ENCODE measurements at regions of chr6 and their contacts with region 1.

Region 1: DNA sequence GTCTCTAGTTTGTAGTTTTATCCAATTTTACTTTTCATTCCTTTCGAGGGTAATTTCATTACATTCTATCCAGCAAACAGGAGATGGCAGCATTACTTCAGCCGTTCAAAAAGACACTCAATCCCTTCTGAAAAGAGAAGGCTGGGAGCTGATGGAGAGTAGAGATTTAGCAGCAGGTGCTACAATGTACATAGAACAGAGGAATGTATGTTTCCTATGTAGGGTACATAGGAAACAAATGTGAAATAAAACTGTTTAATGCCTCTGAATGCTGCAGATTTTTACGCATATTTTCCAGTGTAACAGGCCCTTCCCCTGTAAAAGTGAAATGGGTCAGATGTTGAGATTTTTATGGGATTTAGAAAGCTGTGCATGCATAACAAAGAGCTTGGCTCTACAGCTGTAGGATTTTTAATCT is 16.0 kb downstream of the RPS12 start:
- DNase-seq: no peak
- ATAC-seq: peak; percentile 34

Region 2: GRCh38 chr6:132764361-132764760 is 66.0 kb before region 1 on chr6:
- intact Hi-C with region 1: loop called (anchors 2 kb)
- DNase-seq: no peak
- ATAC-seq: no peak